Activated T-helper 2 cell treated with anti-CD3 and anti-CD28 coated beads, Interferon-gamma antibody, Interleukin-2, Interleukin-4, amounts not matched to agents 10 μg/mL and 5 μg/mL and 100 μg/mL, durations not matched to agents 14 hours and 24 hours and 36 hours (primary cell): ENCODE measurements at regions of chr7 and their contacts with region 1.

Region 1: DNA sequence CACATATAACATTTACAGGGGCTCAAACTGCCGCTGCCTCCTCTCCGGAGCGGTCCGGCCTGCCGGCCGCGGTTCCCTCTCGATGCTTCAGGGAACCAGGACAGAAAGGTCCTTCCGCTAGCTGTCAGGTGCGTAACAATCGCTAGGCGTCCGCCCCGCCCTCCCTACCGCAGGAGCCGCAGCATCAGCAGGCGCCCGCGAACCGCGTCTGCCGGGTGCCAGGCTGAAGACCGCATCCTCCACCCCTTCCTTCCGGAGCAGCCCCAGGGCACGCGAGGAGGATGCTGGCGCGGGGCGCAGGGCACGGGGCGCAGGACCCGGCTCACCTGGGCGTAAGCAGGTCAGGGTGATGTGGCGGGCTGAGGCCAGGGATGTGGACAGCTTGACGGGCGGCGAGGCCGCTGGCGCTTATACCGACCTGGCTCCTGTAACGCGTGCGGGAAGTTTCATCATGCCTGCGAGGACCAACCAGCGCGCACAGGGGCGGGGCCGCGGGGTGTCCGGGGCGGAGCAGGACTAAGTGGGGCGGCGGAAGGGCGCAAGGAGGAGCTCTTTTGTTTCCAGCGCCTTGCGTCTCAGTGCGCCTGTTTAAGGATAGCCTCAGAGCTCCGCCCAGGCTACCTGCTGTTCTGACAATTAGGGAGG is at the start of gene ASNS:
- DNase-seq: peak; percentile 87
- H3K4me3 Mint-ChIP-seq: peak within 1 kb of the TSS; percentile 87
- H3K27ac Mint-ChIP-seq: peak within 1 kb of the TSS; percentile 84
- H3K4me1 Mint-ChIP-seq: peaks cover 23% of the 10 kb centered on the region
- H3K27me3 Mint-ChIP-seq: no peaks in the 10 kb centered on the region
- total RNA-seq, gene ASNS: 63.4 and 64.5 TPM in 2 replicates

Region 2: DNA sequence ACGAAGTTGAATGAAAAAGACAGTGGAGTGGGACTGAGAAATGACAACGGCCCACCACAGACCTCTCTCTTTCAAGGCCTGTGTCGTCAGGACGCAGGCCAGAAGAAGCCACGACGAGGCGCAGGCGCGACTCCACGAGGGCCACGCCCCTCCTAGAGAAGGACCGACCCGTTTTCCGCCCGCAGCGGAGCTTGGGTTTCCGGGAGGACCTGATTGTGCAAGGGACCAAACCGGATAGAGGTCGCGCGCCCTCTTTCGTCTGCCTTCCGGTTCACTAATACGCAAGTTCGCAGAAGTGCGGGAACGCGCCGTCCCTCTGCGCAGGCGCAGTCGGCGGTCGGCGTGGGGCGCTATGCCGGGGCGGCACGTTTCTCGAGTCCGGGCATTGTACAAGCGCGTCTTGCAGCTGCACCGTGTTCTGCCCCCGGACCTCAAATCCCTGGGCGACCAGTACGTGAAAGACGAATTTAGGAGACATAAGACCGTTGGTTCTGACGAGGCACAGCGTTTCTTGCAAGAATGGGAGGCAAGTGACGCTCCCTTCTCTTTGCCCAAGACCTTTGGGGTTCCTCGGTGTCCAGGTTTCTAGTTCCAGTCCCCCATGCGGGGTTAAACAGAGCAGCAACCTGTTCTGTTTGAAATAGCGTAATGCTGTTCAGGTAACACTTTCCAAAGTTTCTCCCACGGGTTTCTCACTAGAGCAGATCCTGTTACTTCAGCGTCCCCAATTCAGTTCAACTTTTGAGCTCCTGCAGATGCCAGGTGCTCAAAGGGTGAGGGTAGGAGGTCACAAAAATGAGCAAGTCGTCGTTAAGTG is 754.6 kb before region 1 on chr7 and contains the start of gene SDHAF3:
- intact Hi-C with region 1: loop called (anchors 2 kb)
- DNase-seq: peak; percentile 97
- H3K4me3 Mint-ChIP-seq: peak within 1 kb of the TSS; percentile 95
- H3K27ac Mint-ChIP-seq: peak within 1 kb of the TSS; percentile 90
- H3K4me1 Mint-ChIP-seq: peaks cover 37% of the 10 kb centered on the region
- H3K27me3 Mint-ChIP-seq: no peaks in the 10 kb centered on the region
- total RNA-seq, gene SDHAF3: 23.7 and 26.9 TPM in 2 replicates

Region 3: DNA sequence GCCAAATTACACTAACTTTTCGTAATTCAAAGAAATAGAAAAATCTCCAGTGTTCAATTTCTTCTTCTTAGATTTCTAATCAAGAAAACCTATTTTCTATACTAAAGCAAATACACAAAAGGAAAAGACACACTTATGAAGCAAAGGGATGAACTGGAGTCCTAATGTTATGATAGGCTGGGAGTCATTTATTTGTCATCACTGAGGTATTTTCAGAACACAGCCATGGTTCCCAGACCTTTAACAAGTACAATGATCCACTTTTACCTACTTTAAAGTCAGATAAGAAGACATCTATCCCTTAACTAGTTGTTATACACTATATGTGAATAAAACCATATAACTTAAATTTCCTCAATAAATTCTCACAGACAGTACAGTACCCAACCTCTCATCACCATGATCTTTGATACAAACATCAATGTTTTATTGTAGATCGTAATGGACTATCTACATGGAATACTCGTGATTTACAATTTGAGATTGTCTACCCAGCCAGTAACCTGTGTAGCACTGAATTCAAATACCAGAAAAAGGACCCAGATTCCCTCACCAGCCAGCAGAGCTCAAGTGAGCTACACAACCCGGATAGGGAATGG is 12.4 kb before region 1 on chr7:
- intact Hi-C with region 1: no loop called
- DNase-seq: no peak
- H3K4me3 Mint-ChIP-seq: no peak overlapping the region
- H3K27ac Mint-ChIP-seq: no peak overlapping the region
- H3K4me1 Mint-ChIP-seq: peaks cover 10% of the 10 kb centered on the region
- H3K27me3 Mint-ChIP-seq: no peaks in the 10 kb centered on the region

Region 4: DNA sequence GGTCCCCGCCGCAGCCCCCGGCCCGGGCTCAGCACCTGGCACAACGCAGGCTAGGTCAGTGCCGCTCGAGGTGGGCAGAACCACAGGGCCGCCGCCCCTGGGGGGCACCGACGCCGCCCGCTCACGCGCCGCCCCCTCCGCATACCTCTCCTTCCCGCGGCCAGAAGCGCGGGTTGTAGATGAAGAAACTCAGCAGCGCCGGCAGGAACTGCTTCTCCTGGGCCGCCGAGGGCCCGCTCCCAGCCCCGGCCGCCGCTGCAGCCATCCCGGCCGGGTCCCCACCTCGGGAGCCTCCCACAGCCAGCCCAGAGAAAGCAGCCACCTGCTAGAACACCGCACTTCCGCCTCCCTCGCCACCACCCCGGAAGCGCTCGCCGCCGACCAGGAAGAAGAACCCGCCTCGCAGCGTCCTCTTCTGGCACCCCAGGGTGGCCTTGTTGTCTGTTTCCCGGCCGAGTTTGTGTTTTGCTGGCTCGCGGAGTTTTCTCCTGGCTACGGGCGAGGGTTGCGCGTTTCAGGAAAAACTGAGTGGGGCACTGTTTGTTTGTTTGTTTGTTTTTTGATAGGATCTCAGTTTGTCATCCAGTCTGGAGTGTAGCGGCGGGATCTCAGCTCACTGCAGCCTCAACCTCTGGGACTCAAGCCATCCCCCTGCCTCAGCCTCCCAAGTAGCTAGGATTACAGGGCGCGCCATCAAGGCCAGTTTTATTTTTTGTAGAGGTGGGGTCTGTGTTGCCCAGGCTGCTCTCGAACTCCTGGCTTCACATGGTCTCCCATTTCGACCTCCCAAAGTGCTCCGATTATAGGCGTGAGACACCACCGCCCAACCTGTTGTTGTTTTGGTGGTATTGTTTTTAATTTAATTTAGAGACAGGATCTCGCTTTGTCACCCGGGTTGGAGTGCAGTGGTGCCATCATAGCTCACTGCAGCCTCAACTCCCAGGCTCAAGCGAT is 100.1 kb after region 1 on chr7:
- intact Hi-C with region 1: loop called (anchors 1 kb)
- DNase-seq: peak; percentile 80
- H3K4me3 Mint-ChIP-seq: peak overlapping the region; percentile 97
- H3K27ac Mint-ChIP-seq: peak overlapping the region; percentile 92
- H3K4me1 Mint-ChIP-seq: peaks cover 10% of the 10 kb centered on the region
- H3K27me3 Mint-ChIP-seq: no peaks in the 10 kb centered on the region